Esophagus squamous epithelium (tissue), 5 donors: ENCODE measurements at regions of chr10 and their contacts with region 1.

Region 1: DNA sequence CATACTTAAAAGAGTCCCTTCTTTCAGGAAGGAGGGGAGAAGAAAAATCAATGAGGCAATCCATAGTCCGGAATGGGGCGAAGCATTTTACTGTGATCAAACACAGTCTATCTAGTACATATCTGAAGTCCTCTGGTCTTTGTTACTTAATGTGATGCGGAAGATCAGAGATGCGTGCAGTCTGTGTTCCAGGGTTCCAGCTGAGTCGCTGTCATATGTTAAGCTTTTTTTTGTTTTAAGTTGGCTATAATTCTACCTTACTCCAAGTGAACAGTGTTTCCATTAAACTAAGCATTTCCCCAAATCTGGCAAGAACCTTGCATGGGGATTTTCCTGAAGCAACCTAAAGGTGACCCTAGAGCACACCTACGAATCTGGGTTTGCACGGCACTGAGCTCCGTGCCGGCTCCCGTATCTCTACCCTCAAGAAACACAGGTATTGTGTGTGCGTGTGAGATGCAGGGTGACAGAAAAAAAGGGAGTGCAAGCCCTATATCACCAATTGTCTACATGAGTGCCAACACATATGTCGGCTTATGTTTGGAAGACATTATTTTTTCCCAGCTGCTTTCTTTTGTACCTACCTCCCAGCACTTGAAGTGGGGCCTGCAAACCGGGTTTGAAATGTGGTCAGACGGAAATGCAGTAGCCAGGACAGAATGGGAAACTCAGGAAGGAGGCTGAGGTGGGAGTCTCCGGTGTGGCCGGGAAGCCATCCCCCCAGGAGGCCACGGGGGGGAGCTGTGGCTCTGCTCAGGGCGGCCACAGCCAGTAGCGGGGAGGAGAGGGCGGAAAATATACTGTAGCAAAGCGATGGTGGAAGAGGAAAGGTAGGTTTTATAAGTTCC is 435.8 kb upstream of the MGMT start:
- DNase-seq: no peak
- H3K4me3 ChIP-seq: no peak overlapping the region
- H3K27ac ChIP-seq: no peak overlapping the region
- H3K4me1 ChIP-seq: peaks cover 0 to 25% (median 2%) of the 10 kb centered on the region in 3 donors
- H3K27me3 ChIP-seq: peaks cover 0 to 64% (median 0%) of the 10 kb centered on the region in 4 donors
- CTCF ChIP-seq: peak; percentile 42 to 73 (median 68)
- POLR2A ChIP-seq: no peak

Region 2: DNA sequence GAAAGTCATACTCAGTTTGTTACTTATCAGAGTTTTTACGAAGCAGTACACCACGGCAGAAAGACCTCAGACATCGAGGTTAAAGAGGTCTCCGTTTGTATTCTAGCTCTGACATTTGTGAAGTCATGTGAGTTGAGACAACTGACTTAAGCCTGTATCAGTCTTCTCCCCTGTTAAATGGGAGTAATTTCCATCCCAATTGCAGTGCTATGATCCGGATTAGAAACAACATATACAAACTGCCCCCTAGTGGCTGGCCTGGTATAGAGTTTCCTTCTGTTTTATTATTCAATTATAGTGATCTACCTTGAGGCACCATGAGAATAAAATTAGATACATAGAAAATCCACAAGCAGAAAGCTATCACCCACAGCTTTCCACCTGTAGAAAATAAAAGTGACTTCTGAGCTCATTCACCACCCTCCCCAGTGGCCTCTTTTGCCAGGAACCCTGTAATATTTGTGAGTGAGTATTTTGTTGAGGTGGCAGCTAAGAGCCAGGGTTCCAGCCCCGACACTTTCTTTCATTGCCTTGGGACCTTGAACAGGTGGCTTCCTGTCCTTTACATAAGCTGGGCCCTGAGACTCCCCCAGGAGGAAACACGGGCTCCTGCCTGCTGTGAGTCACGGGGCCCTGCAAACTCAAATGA is 171.4 kb before region 1 on chr10:
- intact Hi-C with region 1: no loop called
- DNase-seq: no peak
- H3K4me3 ChIP-seq: no peak overlapping the region
- H3K27ac ChIP-seq: no peak overlapping the region
- H3K4me1 ChIP-seq: peaks cover 0 to 10% (median 9%) of the 10 kb centered on the region in 3 donors
- H3K27me3 ChIP-seq: no peaks in the 10 kb centered on the region
- CTCF ChIP-seq: peak in 3 of 6 experiments; percentile 19 to 39 (median 32)
- POLR2A ChIP-seq: no peak

Region 3: GRCh38 chr10:128870830-128871597 is 160.2 kb before region 1 on chr10:
- intact Hi-C with region 1: no loop called
- DNase-seq: no peak
- H3K4me3 ChIP-seq: no peak overlapping the region
- H3K27ac ChIP-seq: no peak overlapping the region
- H3K4me1 ChIP-seq: no peaks in the 10 kb centered on the region
- H3K27me3 ChIP-seq: no peaks in the 10 kb centered on the region
- CTCF ChIP-seq: no peak
- POLR2A ChIP-seq: no peak

Region 4: GRCh38 chr10:129963641-129964501 is 932.7 kb after region 1 on chr10 and contains the start of gene EBF3:
- intact Hi-C with region 1: loop called (anchors 10 kb)
- DNase-seq: no peak
- H3K4me3 ChIP-seq: peak within 1 kb of the TSS; percentile 42 to 74 (median 52)
- H3K27ac ChIP-seq: peak within 1 kb of the TSS; percentile 46 to 84 (median 69)
- H3K4me1 ChIP-seq: peaks cover 5 to 77% (median 36%) of the 10 kb centered on the region in 3 donors
- H3K27me3 ChIP-seq: peaks cover 35 to 100% (median 59%) of the 10 kb centered on the region in 4 donors
- CTCF ChIP-seq: no peak
- POLR2A ChIP-seq: peak in 1 of 4 donors; percentile 24
- total RNA-seq, gene EBF3: 0.42 to 2.9 (median 1.3) TPM